Right ventricle myocardium inferior (tissue), 1 donor: ENCODE measurements at regions of chr18 and their contacts with region 1.

Region 1: GRCh38 chr18:36337679-36338402 is 40.3 kb downstream of the FHOD3 start:
- DNase-seq: no peak
- ATAC-seq: no peak

Region 2: DNA sequence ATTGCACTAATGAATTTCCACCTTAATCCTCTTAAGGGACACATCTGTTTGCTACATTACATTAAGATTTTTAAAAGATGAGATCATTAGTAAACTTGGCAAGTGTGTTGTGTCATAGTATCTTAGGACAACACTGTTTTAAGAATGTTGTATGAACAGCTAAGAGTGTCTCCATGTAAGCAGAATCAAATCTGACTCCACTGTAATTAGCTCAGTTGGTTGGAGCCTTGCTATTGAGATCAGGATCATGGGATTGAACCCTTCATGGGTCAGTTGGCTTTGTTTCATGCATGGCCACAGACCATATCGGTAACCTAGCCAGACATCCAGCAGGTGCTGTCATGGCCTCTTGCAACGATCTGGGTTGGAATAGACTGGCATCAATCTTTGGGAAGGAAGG is 35.2 kb before region 1 on chr18:
- intact Hi-C with region 1: loop called (anchors 5 kb)
- DNase-seq: no peak
- ATAC-seq: no peak

Region 3: DNA sequence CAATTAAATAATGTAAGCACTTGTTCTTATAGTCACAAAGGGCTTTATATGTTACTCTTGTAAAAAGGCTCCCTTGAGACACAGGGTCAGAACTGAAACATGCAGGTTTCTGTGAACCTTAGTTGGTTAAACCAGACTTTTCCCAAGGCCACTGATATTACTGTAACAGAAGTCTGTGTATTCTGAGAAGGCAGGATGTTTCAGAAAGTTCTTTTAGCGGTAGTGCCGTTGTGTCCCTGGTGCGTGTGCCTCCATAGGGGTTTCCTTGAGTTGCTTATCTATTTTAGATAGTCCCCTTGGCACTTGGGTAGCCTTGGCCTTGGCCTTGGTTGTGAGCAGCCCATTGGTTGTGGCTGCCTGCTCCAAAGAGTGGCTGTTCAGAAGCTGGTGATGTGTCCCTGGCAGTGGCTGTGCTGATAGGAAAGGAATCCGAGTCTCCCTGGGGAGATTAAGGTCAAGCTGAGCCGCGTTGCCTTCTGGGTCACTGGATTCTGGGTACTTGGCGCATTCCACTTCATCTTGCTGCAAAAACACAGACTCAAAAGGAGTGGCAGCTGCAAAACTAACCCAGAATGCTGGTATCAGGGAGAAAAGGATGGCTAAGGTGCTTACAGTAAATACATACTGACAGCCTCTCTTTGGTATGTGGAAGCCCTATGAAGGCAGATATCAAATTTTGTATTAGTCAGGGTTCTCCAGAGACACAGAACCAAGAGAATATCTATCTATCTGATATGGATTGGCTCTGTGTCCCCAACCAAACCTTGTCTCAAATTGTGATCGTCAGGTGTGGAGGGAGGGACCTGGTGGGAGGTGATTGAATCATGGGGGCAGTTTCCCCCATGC is 29.4 kb after region 1 on chr18:
- intact Hi-C with region 1: loop called (anchors 2 kb)
- DNase-seq: peak; percentile 83
- ATAC-seq: peak; percentile 98

Region 4: GRCh38 chr18:36402765-36403396 is 65.0 kb after region 1 on chr18:
- intact Hi-C with region 1: loop called (anchors 5 kb)
- DNase-seq: peak; percentile 81
- ATAC-seq: peak; percentile 52